ENCODE measurements at regions of chr2 and their contacts with region 1.

Region 1: DNA sequence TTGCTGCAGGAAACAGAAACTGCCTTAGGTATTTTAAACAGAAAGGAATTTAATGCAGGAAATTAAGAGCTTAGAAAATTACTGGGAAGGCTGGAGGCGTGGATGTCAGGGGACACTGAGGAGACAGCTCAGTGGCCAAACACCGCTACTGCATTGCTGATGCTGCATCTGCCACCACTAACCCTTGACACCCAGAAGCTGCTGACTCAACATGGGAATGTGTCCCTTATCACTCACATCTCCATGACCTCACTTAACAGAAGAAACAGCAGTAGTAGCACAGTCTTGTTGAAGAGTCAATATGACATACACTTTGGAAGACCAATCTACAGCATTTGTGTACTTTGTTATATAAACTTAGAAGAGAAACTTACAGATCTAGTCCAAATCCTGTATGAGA is 906.1 kb downstream of the SLC4A3 start:
- DNase-seq: no peak
- H3K4me3 ChIP-seq: no peak overlapping the region
- H3K27ac ChIP-seq: no peak overlapping the region
- H3K27me3 ChIP-seq: no peaks in the 10 kb centered on the region
- CTCF ChIP-seq: peak; percentile 40

Region 2: DNA sequence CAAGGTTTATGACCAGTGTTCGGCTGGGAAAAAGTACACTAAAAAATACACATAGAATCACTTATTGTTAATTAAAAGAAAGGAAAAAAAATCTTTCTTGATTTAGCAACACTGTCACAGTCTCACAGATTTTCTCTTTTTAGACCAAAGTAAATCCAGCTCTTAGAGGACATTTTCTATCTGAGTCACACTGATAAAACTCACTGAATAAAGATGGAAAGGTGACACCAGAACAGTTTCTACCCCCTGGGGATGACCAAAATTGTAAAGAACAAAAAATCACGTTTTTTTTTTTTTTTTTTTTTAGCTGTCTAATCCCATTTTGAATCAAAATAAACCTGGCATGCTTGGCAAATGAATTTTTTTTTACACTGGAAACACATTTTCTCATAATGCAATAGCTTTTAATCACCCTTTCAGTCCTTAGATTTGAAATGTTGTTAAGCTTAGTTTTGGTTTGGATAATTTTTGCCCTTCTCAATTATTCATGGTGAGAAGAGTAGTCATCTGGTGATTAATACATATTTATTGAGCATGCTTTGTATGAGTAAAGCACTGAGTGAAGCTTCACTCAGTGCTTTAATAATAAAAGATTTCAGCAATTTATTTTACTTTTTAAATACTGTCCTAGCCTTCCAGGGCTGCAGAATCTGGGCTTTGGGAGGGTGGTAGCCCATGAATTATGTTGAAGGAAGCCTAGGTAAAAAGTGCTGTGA is 19.8 kb before region 1 on chr2:
- CTCF ChIA-PET with region 1: interaction called, 10 read pairs
- POLR2A ChIA-PET with region 1: no interaction called
- DNase-seq: no peak
- H3K4me3 ChIP-seq: no peak overlapping the region
- H3K27ac ChIP-seq: no peak overlapping the region
- H3K27me3 ChIP-seq: no peaks in the 10 kb centered on the region
- CTCF ChIP-seq: no peak

Region 3: GRCh38 chr2:220544063-220544462 is 10.6 kb after region 1 on chr2:
- CTCF ChIA-PET with region 1: no interaction called
- POLR2A ChIA-PET with region 1: no interaction called
- DNase-seq: no peak
- H3K4me3 ChIP-seq: no peak overlapping the region
- H3K27ac ChIP-seq: no peak overlapping the region
- H3K27me3 ChIP-seq: no peaks in the 10 kb centered on the region
- CTCF ChIP-seq: no peak